Naive thymus-derived CD4-positive, alpha-beta T cell (primary cell): ENCODE measurements at regions of chr1 and their contacts with region 1.

Region 1: DNA sequence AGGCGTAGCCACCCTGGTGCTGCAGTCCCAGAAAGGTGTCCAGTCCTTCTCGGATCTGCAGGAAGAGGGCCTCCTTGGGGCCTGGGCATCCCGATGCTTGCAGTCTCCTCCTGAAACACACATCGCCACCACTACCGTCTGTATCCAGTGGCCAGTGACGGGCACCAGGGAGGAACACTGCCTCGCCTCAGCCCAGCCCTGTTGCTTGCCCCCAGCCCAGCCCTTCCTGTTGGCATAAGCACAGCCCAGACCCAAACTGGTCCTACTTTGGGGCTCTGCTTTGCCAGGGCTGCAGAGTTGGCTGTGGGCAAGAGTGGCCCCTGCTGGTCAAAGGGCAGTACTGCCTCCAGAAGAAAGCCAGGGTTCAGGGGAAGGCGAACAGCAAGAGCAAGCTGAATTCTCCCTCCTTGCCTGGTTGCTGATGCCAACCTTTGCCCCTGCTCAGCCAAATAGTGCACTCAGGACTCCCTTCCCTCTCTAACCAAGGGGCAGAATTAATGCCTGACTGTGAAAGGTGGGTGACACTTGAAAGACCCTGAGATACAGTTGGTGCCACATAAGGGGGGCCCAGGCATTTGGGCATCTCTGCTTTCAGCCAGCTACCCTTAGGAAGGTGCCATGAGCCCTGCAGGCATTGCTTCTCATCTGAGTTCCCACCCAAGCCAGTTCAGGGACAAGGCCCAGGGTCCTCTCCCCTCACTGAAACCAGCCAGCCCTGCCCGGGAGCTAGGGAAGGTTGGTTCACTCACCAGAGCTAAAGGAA is 11.1 kb upstream of the ARHGEF2 start:
- DNase-seq: peak; percentile 69 to 86 (median 79)
- ATAC-seq: peak; percentile 94
- H3K4me3 ChIP-seq: no peak overlapping the region
- H3K4me3 Mint-ChIP-seq: peak overlapping the region in 2 of 10 donors; percentile 21 to 30
- H3K27ac ChIP-seq: no peak overlapping the region
- H3K27ac Mint-ChIP-seq: peak overlapping the region in 4 of 9 donors; percentile 9 to 73 (median 42)
- H3K4me1 ChIP-seq: peaks cover 10% of the 10 kb centered on the region in 2 donors
- H3K4me1 Mint-ChIP-seq: peaks cover 4 to 17% (median 11%) of the 10 kb centered on the region in 7 donors
- H3K27me3 ChIP-seq: no peaks in the 10 kb centered on the region
- H3K27me3 Mint-ChIP-seq: no peaks in the 10 kb centered on the region

Region 2: GRCh38 chr1:155479205-155479604 is 510.2 kb before region 1 on chr1:
- CTCF ChIA-PET with region 1: no interaction called
- POLR2A ChIA-PET with region 1: no interaction called
- intact Hi-C with region 1: no loop called
- DNase-seq: no peak
- ATAC-seq: no peak
- H3K4me3 ChIP-seq: no peak overlapping the region
- H3K4me3 Mint-ChIP-seq: no peak overlapping the region
- H3K27ac ChIP-seq: no peak overlapping the region
- H3K27ac Mint-ChIP-seq: peak overlapping the region in 4 of 9 donors; percentile 37 to 60 (median 50)
- H3K4me1 ChIP-seq: no peaks in the 10 kb centered on the region
- H3K4me1 Mint-ChIP-seq: peaks cover 15 to 50% (median 38%) of the 10 kb centered on the region in 7 donors
- H3K27me3 ChIP-seq: no peaks in the 10 kb centered on the region
- H3K27me3 Mint-ChIP-seq: no peaks in the 10 kb centered on the region

Region 3: GRCh38 chr1:155911156-155912055 is 78.0 kb before region 1 on chr1 and contains the start of gene RIT1:
- CTCF ChIA-PET with region 1: no interaction called
- POLR2A ChIA-PET with region 1: no interaction called
- intact Hi-C with region 1: loop called in 1 of 2 experiments (anchors 1 kb)
- DNase-seq: peak; percentile 68 to 85 (median 76)
- ATAC-seq: peak; percentile 99
- H3K4me3 ChIP-seq: peak within 1 kb of the TSS; percentile 73
- H3K4me3 Mint-ChIP-seq: peak within 1 kb of the TSS; percentile 85 to 99 (median 96)
- H3K27ac ChIP-seq: peak within 1 kb of the TSS; percentile 80
- H3K27ac Mint-ChIP-seq: peak within 1 kb of the TSS; percentile 90 to 99 (median 96)
- H3K4me1 ChIP-seq: peaks cover 5 to 17% of the 10 kb centered on the region in 2 donors
- H3K4me1 Mint-ChIP-seq: peaks cover 11 to 38% (median 21%) of the 10 kb centered on the region in 7 donors
- H3K27me3 ChIP-seq: no peaks in the 10 kb centered on the region
- H3K27me3 Mint-ChIP-seq: no peaks in the 10 kb centered on the region
- total RNA-seq, gene RIT1: 34.0 to 83.9 (median 41.4) TPM

Region 4: GRCh38 chr1:155970531-155971167 is 18.8 kb before region 1 on chr1:
- CTCF ChIA-PET with region 1: interaction called, 21 read pairs
- POLR2A ChIA-PET with region 1: interaction called, 144 read pairs
- intact Hi-C with region 1: loop called (anchors 1 to 2 kb)
- DNase-seq: peak in 1 of 9 donors; percentile 14
- ATAC-seq: peak; percentile 89
- H3K4me3 ChIP-seq: no peak overlapping the region
- H3K4me3 Mint-ChIP-seq: peak overlapping the region; percentile 74 to 95 (median 78)
- H3K27ac ChIP-seq: peak overlapping the region; percentile 66
- H3K27ac Mint-ChIP-seq: peak overlapping the region; percentile 83 to 96 (median 95)
- H3K4me1 ChIP-seq: peaks cover 82 to 88% of the 10 kb centered on the region in 2 donors
- H3K4me1 Mint-ChIP-seq: peaks cover 87 to 99% (median 97%) of the 10 kb centered on the region in 7 donors
- H3K27me3 ChIP-seq: no peaks in the 10 kb centered on the region
- H3K27me3 Mint-ChIP-seq: no peaks in the 10 kb centered on the region

Region 5: GRCh38 chr1:156025877-156026276 is 36.5 kb after region 1 on chr1:
- CTCF ChIA-PET with region 1: no interaction called
- POLR2A ChIA-PET with region 1: no interaction called
- intact Hi-C with region 1: no loop called
- DNase-seq: peak in 4 of 9 donors; percentile 13 to 27 (median 18)
- ATAC-seq: peak; percentile 80
- H3K4me3 ChIP-seq: no peak overlapping the region
- H3K4me3 Mint-ChIP-seq: peak overlapping the region in 1 of 10 donors; percentile 55
- H3K27ac ChIP-seq: no peak overlapping the region
- H3K27ac Mint-ChIP-seq: no peak overlapping the region
- H3K4me1 ChIP-seq: peaks cover 0 to 3% of the 10 kb centered on the region in 2 donors
- H3K4me1 Mint-ChIP-seq: peaks cover 6 to 22% (median 19%) of the 10 kb centered on the region in 7 donors
- H3K27me3 ChIP-seq: no peaks in the 10 kb centered on the region
- H3K27me3 Mint-ChIP-seq: peaks cover 0 to 17% (median 0%) of the 10 kb centered on the region in 5 donors